OCI-LY7 (cell line): ENCODE measurements at regions of chr6 and their contacts with region 1.

Region 1: GRCh38 chr6:150334790-150335783 is 33.7 kb upstream of the IYD start:
- DNase-seq: peak; percentile 74
- H3K4me3 ChIP-seq: no peak overlapping the region
- H3K27ac ChIP-seq: no peak overlapping the region
- H3K4me1 ChIP-seq: peaks cover 8% of the 10 kb centered on the region
- CTCF ChIP-seq: peak; percentile 98

Region 2: GRCh38 chr6:149941583-149942431 is 393.3 kb before region 1 on chr6 and contains the start of gene ULBP2:
- CTCF ChIA-PET with region 1: no interaction called
- POLR2A ChIA-PET with region 1: no interaction called
- intact Hi-C with region 1: loop called (anchors 5 kb)
- DNase-seq: peak; percentile 83
- H3K4me3 ChIP-seq: peak within 1 kb of the TSS; percentile 73
- H3K27ac ChIP-seq: no peak within 1 kb of the TSS
- H3K4me1 ChIP-seq: peaks cover 5% of the 10 kb centered on the region
- CTCF ChIP-seq: no peak
- total RNA-seq, gene ULBP2: 0.60 TPM in 1 of 2 replicates, not detected in the other

Region 3: DNA sequence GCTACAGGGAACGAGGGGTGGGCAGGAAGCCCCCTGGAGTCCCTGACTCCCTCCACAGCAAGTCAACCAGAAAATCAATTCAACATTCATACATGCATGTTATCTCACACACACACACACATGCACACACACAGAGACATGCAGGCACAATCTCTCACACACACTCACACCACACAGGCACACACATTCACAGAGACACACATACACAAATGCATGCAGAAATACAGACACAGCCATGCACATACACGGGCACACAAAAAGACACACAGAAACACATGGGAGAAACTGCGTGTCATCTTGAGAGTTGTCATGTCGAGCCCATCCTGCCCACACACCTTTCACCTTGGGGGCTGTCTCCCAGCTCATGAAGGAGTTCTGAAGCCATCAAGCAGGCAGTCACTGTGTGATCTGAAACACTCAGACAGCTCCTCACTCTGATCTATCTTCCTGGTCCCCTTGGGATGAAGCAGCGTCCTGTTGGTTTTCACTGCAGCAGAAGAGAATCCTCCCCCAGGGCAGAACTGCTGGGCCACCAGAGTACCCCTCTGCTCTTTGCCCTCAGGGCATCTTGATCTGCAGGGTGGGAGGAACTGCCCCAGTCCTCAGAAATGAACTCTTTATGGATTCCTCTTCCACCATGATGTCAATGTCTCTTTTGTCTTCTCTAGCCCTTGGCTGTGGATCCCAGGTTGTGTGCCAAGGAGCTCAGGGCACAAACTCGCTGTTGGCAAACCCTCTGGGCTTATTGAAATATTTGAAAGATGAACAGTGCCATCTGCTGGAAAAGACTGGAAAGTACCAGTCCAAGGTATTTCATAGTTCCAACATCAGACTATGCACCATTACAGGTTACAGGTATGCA is 318.5 kb before region 1 on chr6:
- CTCF ChIA-PET with region 1: no interaction called
- POLR2A ChIA-PET with region 1: no interaction called
- intact Hi-C with region 1: loop called (anchors 1 kb)
- DNase-seq: peak; percentile 76
- H3K4me3 ChIP-seq: no peak overlapping the region
- H3K27ac ChIP-seq: no peak overlapping the region
- H3K4me1 ChIP-seq: no peaks in the 10 kb centered on the region
- CTCF ChIP-seq: peak; percentile 79

Region 4: DNA sequence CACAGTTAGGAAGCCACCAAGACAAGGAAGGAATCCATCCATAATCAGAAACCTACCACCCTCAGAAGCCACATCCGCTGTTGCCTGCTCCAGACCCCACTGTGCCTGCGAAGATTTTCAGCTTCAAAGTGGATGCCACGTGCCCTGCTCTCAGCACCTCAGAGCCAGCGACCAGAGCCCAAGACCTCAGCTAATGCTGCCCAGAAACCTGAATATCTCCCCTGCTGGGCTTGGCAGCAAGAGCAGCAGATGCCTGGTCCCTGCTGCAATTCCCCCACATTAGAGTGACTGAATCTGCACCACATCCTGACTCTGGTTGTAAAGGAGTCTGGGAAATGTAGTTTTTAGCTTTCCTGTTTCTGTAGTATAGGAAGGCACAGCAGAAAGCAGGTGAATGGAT is 255.5 kb before region 1 on chr6:
- CTCF ChIA-PET with region 1: no interaction called
- POLR2A ChIA-PET with region 1: no interaction called
- intact Hi-C with region 1: loop called (anchors 1 kb)
- DNase-seq: peak; percentile 24
- H3K4me3 ChIP-seq: no peak overlapping the region
- H3K27ac ChIP-seq: no peak overlapping the region
- H3K4me1 ChIP-seq: no peaks in the 10 kb centered on the region
- CTCF ChIP-seq: no peak

Region 5: DNA sequence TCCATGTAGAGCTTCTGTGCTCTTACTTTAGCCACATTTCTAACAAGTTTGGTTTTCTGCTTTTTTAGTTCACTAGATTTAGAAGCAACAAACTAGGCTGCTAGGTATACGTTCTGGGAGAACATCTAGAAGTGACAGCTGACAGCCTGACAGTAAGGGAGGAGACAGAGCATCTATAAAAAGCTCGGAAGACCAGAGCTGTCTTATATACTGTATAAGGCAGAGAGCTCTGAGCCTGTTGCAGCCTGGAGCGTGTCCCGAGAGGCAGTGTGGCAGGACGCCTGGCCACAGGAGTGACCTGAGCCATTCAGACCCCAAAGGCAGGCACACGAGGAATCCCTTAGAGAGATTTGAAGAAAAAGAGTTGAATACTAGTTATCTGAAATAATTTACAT is 167.6 kb before region 1 on chr6:
- CTCF ChIA-PET with region 1: no interaction called
- POLR2A ChIA-PET with region 1: no interaction called
- intact Hi-C with region 1: no loop called
- DNase-seq: peak; percentile 50
- H3K4me3 ChIP-seq: peak overlapping the region; percentile 36
- H3K27ac ChIP-seq: peak overlapping the region; percentile 84
- H3K4me1 ChIP-seq: peaks cover 25% of the 10 kb centered on the region
- CTCF ChIP-seq: no peak

Region 6: GRCh38 chr6:150269656-150270223 is 65.3 kb before region 1 on chr6:
- CTCF ChIA-PET with region 1: no interaction called
- POLR2A ChIA-PET with region 1: no interaction called
- intact Hi-C with region 1: loop called (anchors 5 kb)
- DNase-seq: no peak
- H3K4me3 ChIP-seq: no peak overlapping the region
- H3K27ac ChIP-seq: no peak overlapping the region
- H3K4me1 ChIP-seq: peaks cover 44% of the 10 kb centered on the region
- CTCF ChIP-seq: no peak

Region 7: GRCh38 chr6:150352321-150353291 is 17.5 kb after region 1 on chr6:
- CTCF ChIA-PET with region 1: no interaction called
- POLR2A ChIA-PET with region 1: no interaction called
- intact Hi-C with region 1: no loop called
- DNase-seq: no peak
- H3K4me3 ChIP-seq: no peak overlapping the region
- H3K27ac ChIP-seq: no peak overlapping the region
- H3K4me1 ChIP-seq: peaks cover 14% of the 10 kb centered on the region
- CTCF ChIP-seq: no peak